AG04450 (cell line): ENCODE measurements at regions of chr2 and their contacts with region 1.

Region 1: DNA sequence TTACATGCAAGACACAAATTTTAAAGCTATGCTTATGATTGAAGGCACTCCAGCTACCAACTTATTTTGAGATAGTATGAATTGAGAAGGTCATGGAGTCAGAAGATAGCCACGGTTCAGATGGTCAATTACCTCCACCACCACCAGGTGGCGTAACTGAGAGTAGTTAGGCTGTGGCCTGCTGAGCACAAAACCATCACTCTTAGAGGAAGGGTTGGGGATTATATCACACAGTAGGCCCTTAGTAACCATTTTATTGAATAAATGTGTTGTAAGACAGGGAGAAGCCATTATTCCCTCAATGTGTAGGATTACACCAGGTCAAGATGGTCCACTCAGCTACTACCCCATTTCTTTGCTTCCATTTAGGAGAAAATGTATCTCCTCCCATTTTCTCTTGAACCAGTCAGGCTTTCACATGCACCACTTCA is 18.8 kb downstream of the KLHL41 start:
- DNase-seq: no peak
- H3K4me3 ChIP-seq: no peak overlapping the region
- H3K27ac ChIP-seq: no peak overlapping the region
- H3K27me3 ChIP-seq: no peaks in the 10 kb centered on the region
- CTCF ChIP-seq: peak; percentile 86

Region 2: DNA sequence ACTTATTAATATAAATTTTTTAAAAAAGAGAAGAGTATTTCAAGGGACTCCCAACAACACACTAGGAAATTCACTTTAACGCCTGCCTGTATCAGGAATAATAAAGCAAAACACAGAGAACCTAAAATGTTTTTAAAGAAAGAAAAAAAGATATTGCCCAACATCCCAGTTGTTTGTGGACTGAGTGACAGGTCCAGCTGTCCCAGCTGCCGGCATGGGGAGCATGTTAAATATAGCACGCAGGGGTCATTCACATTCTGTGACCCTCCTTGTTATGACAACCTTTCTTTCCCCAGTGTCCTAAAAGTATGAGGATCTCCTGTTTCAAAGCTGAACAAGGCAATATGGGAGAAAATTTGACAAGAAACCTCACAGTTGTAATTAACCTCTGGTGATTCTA is 14.4 kb before region 1 on chr2:
- CTCF ChIA-PET with region 1: interaction called, 23 read pairs
- POLR2A ChIA-PET with region 1: no interaction called
- DNase-seq: no peak
- H3K4me3 ChIP-seq: no peak overlapping the region
- H3K27ac ChIP-seq: no peak overlapping the region
- H3K27me3 ChIP-seq: no peaks in the 10 kb centered on the region
- CTCF ChIP-seq: no peak

Region 3: DNA sequence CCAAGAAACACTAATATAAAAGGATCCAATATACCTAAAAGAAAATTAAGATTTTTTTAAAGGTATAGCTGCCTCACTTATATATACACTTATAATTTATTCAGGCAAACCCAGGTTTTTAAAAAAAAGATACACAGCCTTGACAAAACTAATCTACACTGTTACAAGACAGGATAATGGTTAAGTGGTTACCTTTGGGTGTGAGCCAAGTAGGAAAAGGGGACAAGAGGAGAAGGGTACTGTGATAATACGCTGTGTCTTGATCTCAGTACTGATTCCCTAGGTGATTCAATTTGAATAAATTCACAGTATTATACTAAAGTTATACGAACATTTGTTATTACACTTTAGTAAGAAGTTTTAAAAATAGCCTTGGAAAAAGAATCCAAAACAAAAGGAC is 11.9 kb after region 1 on chr2:
- CTCF ChIA-PET with region 1: interaction called, 10 read pairs
- POLR2A ChIA-PET with region 1: no interaction called
- DNase-seq: no peak
- H3K4me3 ChIP-seq: no peak overlapping the region
- H3K27ac ChIP-seq: no peak overlapping the region
- H3K27me3 ChIP-seq: no peaks in the 10 kb centered on the region
- CTCF ChIP-seq: no peak

Region 4: GRCh38 chr2:169546756-169547155 is 18.5 kb after region 1 on chr2:
- CTCF ChIA-PET with region 1: interaction called, 18 read pairs
- POLR2A ChIA-PET with region 1: no interaction called
- DNase-seq: no peak
- H3K4me3 ChIP-seq: no peak overlapping the region
- H3K27ac ChIP-seq: no peak overlapping the region
- H3K27me3 ChIP-seq: no peaks in the 10 kb centered on the region
- CTCF ChIP-seq: no peak

Region 5: DNA sequence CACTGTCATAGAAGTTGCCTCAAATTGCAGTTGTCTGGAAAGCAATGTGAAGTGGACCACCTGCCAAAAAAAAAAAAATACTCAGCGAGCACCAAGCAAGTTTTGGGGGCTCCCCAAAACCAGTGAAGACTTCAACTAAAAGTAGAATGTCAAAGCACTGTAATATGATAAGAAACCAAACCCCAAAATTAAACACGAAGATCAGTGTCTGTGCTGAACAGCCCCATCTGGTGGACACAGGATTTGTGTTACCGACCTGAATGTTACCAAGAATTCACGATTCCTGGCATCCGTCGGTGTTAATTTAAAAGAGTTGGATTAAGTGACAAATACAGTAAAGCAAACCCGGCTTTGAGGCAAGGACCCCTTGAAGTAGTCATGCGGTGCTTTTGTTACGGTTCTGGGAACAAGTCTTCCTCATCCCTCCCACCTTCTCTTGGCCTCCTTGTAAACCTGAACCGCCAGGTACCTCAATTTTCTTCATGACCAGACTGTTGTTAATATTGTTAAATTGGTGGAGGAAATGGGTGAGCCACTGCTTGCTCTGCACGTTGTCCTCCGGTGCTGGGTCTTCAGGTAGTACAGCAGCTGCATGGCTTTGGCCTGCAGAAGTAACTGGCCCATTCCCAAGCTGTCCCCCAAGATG is 239.1 kb after region 1 on chr2:
- CTCF ChIA-PET with region 1: interaction called, 10 read pairs
- POLR2A ChIA-PET with region 1: no interaction called
- DNase-seq: no peak
- H3K4me3 ChIP-seq: no peak overlapping the region
- H3K27ac ChIP-seq: no peak overlapping the region
- H3K27me3 ChIP-seq: peaks cover 12% of the 10 kb centered on the region
- CTCF ChIP-seq: peak; percentile 73

Region 6: GRCh38 chr2:169790581-169790980 is 262.3 kb after region 1 on chr2:
- CTCF ChIA-PET with region 1: interaction called, 15 read pairs
- POLR2A ChIA-PET with region 1: no interaction called
- DNase-seq: no peak
- H3K4me3 ChIP-seq: no peak overlapping the region
- H3K27ac ChIP-seq: no peak overlapping the region
- H3K27me3 ChIP-seq: peaks cover 3% of the 10 kb centered on the region
- CTCF ChIP-seq: no peak

Region 7: GRCh38 chr2:169853041-169853668 is 324.9 kb after region 1 on chr2:
- CTCF ChIA-PET with region 1: no interaction called
- POLR2A ChIA-PET with region 1: no interaction called
- DNase-seq: no peak
- H3K4me3 ChIP-seq: no peak overlapping the region
- H3K27ac ChIP-seq: no peak overlapping the region
- H3K27me3 ChIP-seq: no peaks in the 10 kb centered on the region
- CTCF ChIP-seq: no peak